Panc1 (cell line): ENCODE measurements at regions of chr7 and their contacts with region 1.

Region 1: GRCh38 chr7:82164813-82165212 is 278.8 kb downstream of the CACNA2D1 start:
- DNase-seq: no peak
- ATAC-seq: no peak
- H3K4me3 ChIP-seq: no peak overlapping the region
- H3K27ac ChIP-seq: no peak overlapping the region
- H3K4me1 ChIP-seq: no peaks in the 10 kb centered on the region
- H3K27me3 ChIP-seq: no peaks in the 10 kb centered on the region
- CTCF ChIP-seq: peak; percentile 34; the same call in 1 of the 2 replicates

Region 2: DNA sequence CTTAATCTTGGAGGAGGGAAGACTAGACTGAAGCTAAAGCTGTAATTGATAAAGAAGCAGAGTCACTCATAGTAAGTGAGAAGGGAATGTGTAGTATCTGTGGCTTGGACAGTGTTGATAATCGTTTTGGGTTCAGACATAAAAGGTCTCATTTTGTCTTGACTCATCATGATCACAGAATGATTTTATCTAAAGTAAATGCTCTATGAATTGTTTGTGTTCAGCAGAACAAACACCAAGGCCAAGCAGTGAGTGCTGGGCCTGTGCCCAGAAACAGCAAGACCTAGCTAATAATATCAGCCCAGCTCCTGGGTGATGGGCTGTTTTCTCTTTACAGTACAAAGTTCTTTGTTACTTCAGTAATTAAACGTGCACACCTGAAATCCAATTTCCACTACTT is 1553.0 kb before region 1 on chr7:
- CTCF ChIA-PET with region 1: no interaction called
- POLR2A ChIA-PET with region 1: no interaction called
- in situ Hi-C with region 1: no loop called
- intact Hi-C with region 1: no loop called
- DNase-seq: no peak
- ATAC-seq: peak; percentile 94
- H3K4me3 ChIP-seq: no peak overlapping the region
- H3K27ac ChIP-seq: peak overlapping the region; percentile 29; the same call in 1 of the 2 replicates
- H3K4me1 ChIP-seq: peaks cover 12% of the 10 kb centered on the region; the same call in 1 of the 2 replicates
- H3K27me3 ChIP-seq: no peaks in the 10 kb centered on the region
- CTCF ChIP-seq: no peak

Region 3: DNA sequence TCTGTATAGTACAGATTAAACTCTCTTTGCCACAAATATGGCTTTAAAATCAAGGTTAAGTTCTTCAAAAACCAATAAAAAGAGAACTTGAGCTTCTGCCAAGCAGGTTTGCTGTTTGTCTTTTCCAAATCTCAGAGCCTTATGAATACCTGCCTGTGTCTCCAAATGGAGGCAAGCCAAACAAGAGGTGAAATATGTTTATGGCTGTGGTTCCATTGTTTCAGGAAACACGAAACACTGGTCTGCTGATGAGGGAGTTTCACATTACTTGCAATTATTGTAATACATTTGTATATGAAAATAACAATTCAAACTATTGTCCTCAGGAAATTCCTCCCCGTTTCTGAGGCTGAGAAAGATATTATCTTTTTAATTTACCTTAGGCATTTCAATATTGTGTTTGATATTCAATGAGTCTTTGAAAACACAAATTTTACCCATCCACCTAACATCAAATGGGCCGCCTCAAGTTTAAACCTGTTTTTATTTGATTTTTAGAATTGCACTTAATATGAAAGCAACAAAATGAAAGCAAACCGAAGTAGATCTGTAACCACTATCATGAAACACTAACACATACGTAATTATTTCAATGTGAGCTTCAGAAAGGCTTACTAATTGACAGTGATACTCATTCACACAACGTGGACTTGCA is 754.2 kb before region 1 on chr7:
- CTCF ChIA-PET with region 1: no interaction called
- POLR2A ChIA-PET with region 1: interaction called, 17 read pairs
- in situ Hi-C with region 1: no loop called
- intact Hi-C with region 1: no loop called
- DNase-seq: no peak
- ATAC-seq: peak; percentile 69; the same call in 1 of the 2 replicates
- H3K4me3 ChIP-seq: no peak overlapping the region
- H3K27ac ChIP-seq: peak overlapping the region; percentile 84
- H3K4me1 ChIP-seq: peaks cover 14% of the 10 kb centered on the region; the same call in 1 of the 2 replicates
- H3K27me3 ChIP-seq: no peaks in the 10 kb centered on the region
- CTCF ChIP-seq: no peak

Region 4: GRCh38 chr7:81993186-81993585 is 171.6 kb before region 1 on chr7:
- CTCF ChIA-PET with region 1: no interaction called
- POLR2A ChIA-PET with region 1: no interaction called
- in situ Hi-C with region 1: no loop called
- intact Hi-C with region 1: no loop called
- DNase-seq: no peak
- ATAC-seq: no peak
- H3K4me3 ChIP-seq: no peak overlapping the region
- H3K27ac ChIP-seq: no peak overlapping the region
- H3K4me1 ChIP-seq: no peaks in the 10 kb centered on the region
- H3K27me3 ChIP-seq: no peaks in the 10 kb centered on the region
- CTCF ChIP-seq: no peak